ENCODE measurements at regions of chr10 and their contacts with region 1.

Region 1: DNA sequence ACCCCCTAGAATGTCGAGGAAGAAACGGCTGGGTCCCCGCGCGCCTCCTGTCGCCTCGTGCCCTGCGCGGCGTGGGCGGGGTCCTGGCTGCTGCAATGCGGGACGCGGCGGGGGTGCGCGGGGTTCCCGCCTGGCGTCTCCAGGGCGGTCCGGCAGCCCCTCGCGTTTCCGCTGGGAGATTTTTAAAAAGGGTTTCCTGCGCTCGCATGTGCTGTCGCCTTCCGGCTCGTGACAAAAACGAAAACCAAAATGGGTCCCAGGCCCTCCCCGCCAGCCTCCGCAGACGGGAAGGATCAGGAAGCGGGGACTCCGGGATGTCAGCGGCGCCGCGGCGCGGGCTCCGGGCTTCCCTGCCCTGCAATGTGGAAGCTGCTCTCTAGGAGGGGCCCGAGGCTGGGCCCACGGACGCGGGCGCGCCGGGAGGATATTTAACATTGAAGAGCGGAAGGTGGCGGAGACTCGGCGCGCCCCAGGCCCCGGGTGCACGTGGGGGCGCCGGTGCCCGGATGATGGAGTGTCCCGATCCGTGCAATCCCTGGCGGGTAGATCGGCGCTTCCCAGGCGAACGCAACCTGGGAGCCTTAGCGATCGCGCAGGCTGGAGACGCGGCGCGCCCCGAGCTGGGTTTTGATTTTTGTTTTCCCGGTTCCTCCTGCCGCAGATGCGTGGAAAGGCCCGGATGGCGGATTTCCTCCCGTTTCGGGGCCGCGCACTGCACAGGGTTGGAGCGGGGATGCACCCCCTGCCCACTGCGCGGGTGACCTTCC is 1.0 kb downstream of the PFKP start:
- H3K4me3 Mint-ChIP-seq: peak overlapping the region; percentile 99
- H3K27ac Mint-ChIP-seq: peak overlapping the region; percentile 94
- H3K4me1 Mint-ChIP-seq: peaks cover 44% of the 10 kb centered on the region
- H3K27me3 Mint-ChIP-seq: peaks cover 33% of the 10 kb centered on the region

Region 2: GRCh38 chr10:3095373-3096139 is 27.2 kb after region 1 on chr10:
- intact Hi-C with region 1: loop called (anchors 1 kb)
- H3K4me3 Mint-ChIP-seq: peak overlapping the region; percentile 51
- H3K27ac Mint-ChIP-seq: peak overlapping the region; percentile 83
- H3K4me1 Mint-ChIP-seq: peaks cover 69% of the 10 kb centered on the region
- H3K27me3 Mint-ChIP-seq: no peaks in the 10 kb centered on the region